B cell (primary cell): ENCODE measurements at regions of chr12 and their contacts with region 1.

Region 1: GRCh38 chr12:103884316-103884715 is 43.3 kb upstream of the NT5DC3 start:
- DNase-seq: peak; percentile 55
- ATAC-seq: peak; percentile 56
- H3K4me3 ChIP-seq: no peak overlapping the region
- H3K4me3 Mint-ChIP-seq: no peak overlapping the region
- H3K27ac ChIP-seq: no peak overlapping the region
- H3K27ac Mint-ChIP-seq: no peak overlapping the region
- H3K4me1 ChIP-seq: peaks cover 11 to 15% of the 10 kb centered on the region in 2 donors
- H3K4me1 Mint-ChIP-seq: peaks cover 22% of the 10 kb centered on the region
- H3K27me3 ChIP-seq: no peaks in the 10 kb centered on the region
- H3K27me3 Mint-ChIP-seq: no peaks in the 10 kb centered on the region
- CTCF ChIP-seq: peak; percentile 65

Region 2: GRCh38 chr12:103978384-103978982 is 94.2 kb after region 1 on chr12:
- CTCF ChIA-PET with region 1: interaction called, 3 read pairs
- POLR2A ChIA-PET with region 1: no interaction called
- intact Hi-C with region 1: loop called (anchors 1 kb)
- DNase-seq: peak; percentile 64
- ATAC-seq: peak; percentile 76
- H3K4me3 ChIP-seq: no peak overlapping the region
- H3K4me3 Mint-ChIP-seq: no peak overlapping the region
- H3K27ac ChIP-seq: peak overlapping the region in 1 of 2 donors; percentile 5
- H3K27ac Mint-ChIP-seq: peak overlapping the region; percentile 11
- H3K4me1 ChIP-seq: peaks cover 10 to 11% of the 10 kb centered on the region in 2 donors
- H3K4me1 Mint-ChIP-seq: peaks cover 18% of the 10 kb centered on the region
- H3K27me3 ChIP-seq: no peaks in the 10 kb centered on the region
- H3K27me3 Mint-ChIP-seq: no peaks in the 10 kb centered on the region
- CTCF ChIP-seq: no peak